ENCODE measurements at regions of chr7 and their contacts with region 1.

Region 1: GRCh38 chr7:75048435-75049379 is 24.9 kb downstream of the RCC1L start:
- DNase-seq: no peak
- H3K4me3 ChIP-seq: no peak overlapping the region
- H3K27ac ChIP-seq: no peak overlapping the region
- H3K4me1 ChIP-seq: peaks cover 0 to 15% (median 14%) of the 10 kb centered on the region in 4 donors
- H3K27me3 ChIP-seq: no peaks in the 10 kb centered on the region
- CTCF ChIP-seq: no peak
- EP300 ChIP-seq: no peak
- POLR2A ChIP-seq: no peak

Region 2: DNA sequence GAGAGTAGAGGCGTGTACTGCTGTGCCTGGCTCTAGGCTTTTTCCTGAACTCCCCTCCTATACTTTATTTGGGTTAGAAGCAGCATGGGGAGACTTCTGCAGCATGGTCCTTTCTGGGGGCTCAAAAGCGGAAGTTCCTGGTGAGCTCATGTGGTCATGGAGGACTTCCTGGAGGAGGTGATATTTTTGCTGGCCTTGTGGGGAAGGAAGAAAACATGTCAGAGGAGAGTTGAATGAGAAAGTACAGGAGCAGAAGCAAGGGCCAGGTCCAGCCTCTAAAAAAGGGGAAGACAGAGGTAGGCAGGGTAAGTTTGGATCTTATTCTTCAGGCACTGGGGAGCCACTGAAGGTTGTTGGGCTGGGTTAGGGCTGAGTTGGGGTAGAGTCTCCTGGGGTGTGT is 38.7 kb before region 1 on chr7:
- intact Hi-C with region 1: loop called (anchors 5 kb)
- DNase-seq: no peak
- H3K4me3 ChIP-seq: no peak overlapping the region
- H3K27ac ChIP-seq: no peak overlapping the region
- H3K4me1 ChIP-seq: peaks cover 0 to 8% (median 3%) of the 10 kb centered on the region in 4 donors
- H3K27me3 ChIP-seq: no peaks in the 10 kb centered on the region
- CTCF ChIP-seq: no peak
- EP300 ChIP-seq: no peak
- POLR2A ChIP-seq: no peak

Measured in esophagus muscularis mucosa (tissue), 4 donors.